ENCODE measurements at regions of chr13 and their contacts with region 1.

Region 1: DNA sequence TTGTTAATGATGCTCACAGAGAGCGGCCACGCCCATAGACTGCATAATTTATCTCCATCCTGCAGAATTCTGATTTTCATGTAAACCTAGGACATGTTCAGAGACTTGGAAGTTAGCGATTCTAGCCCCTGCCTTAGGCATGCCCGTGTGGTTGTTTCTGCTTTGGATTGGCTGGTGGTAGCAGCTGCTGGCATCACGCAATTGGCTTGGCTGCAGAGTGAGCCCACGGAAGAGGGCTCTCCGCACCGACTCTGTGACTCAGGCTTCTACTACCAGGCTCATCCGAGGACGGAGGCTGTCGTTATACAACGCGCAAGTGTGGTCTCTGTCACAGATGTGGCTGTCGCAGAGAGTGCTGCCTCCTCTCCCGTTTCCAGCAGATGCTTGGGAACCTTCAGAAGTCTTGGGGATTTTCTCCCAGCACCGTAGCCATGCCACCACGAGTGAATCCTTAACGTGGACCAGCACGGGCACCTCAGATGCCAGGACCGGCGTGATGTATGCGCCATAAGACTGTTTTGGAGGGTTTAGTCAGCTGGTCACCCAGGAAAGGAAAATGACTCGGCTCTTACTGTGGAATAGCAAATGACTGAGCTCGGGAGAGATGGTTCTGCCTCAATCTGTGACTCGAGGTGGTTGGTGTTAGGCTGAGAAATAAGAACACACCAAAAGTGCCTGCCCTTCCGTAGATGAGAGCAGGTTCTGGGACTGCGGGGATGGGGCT is 61.0 kb upstream of the F7 start:
- DNase-seq: peak; percentile 59 to 94 (median 92)
- H3K4me3 ChIP-seq: peak overlapping the region; percentile 41 to 85 (median 68)
- H3K27ac ChIP-seq: peak overlapping the region; percentile 16 to 98 (median 91)
- H3K27me3 ChIP-seq: no peaks in the 10 kb centered on the region
- CTCF ChIP-seq: peak in 17 of 56 donors; percentile 6 to 42 (median 18)

Region 2: GRCh38 chr13:112972867-112973576 is 71.5 kb before region 1 on chr13:
- intact Hi-C with region 1: no loop called
- DNase-seq: peak in 2 of 10 donors; percentile 33 to 41
- H3K4me3 ChIP-seq: peak overlapping the region in 3 of 59 donors; percentile 3 to 28 (median 15)
- H3K27ac ChIP-seq: peak overlapping the region in 2 of 59 donors; percentile 17 to 77
- H3K27me3 ChIP-seq: peaks cover 0 to 29% (median 0%) of the 10 kb centered on the region in 45 donors
- CTCF ChIP-seq: no peak

Region 3: DNA sequence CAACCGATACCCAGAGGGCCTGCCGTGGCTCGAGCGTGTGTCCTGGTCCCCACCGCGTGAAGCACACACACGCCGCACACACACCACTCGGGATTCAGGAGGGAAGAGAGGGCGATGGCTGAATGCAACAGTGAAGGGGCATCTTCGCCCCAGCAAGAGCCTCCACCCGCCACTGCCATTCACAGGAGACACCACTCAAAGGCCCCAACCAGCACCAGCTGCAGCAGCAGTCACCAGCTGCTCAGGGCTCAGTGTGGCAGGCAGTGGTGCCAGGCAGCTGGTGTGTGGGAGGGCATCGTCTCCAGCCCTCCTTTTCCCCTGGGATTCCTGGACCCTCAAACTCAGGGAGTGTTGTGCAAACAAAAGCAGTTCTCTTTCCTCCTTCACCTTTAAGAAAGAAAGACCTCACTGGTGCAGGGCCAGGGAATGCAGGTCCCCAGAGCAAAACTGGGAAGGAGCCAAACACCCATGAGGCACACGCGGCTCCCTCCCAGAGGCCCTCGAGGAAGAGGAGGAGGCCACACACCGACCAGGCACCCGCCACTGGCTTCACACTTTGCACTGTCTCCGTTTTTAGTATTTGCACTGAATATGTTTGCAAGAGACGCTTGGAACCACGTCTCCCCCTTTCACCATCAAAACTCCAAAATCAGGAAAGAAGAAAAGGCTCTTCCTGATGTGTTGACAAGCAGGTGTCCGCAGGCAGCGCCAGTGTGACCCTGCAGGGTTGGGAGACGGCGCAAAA is 34.5 kb after region 1 on chr13:
- intact Hi-C with region 1: loop called in 1 of 2 experiments (anchors 2 kb)
- DNase-seq: peak in 9 of 10 donors; percentile 47 to 88 (median 79)
- H3K4me3 ChIP-seq: peak overlapping the region in 1 of 59 donors; percentile 5
- H3K27ac ChIP-seq: peak overlapping the region; percentile 59 to 96 (median 90)
- H3K27me3 ChIP-seq: no peaks in the 10 kb centered on the region
- CTCF ChIP-seq: peak in 1 of 56 donors; percentile 14

Region 4: GRCh38 chr13:113153810-113154748 is 109.5 kb after region 1 on chr13:
- intact Hi-C with region 1: loop called (anchors 2 to 5 kb)
- DNase-seq: peak; percentile 73 to 86 (median 82)
- H3K4me3 ChIP-seq: peak overlapping the region; percentile 24 to 74 (median 57)
- H3K27ac ChIP-seq: peak overlapping the region in 58 of 59 donors; percentile 6 to 90 (median 80)
- H3K27me3 ChIP-seq: no peaks in the 10 kb centered on the region
- CTCF ChIP-seq: peak in 7 of 56 donors; percentile 6 to 37 (median 13)

Region 5: DNA sequence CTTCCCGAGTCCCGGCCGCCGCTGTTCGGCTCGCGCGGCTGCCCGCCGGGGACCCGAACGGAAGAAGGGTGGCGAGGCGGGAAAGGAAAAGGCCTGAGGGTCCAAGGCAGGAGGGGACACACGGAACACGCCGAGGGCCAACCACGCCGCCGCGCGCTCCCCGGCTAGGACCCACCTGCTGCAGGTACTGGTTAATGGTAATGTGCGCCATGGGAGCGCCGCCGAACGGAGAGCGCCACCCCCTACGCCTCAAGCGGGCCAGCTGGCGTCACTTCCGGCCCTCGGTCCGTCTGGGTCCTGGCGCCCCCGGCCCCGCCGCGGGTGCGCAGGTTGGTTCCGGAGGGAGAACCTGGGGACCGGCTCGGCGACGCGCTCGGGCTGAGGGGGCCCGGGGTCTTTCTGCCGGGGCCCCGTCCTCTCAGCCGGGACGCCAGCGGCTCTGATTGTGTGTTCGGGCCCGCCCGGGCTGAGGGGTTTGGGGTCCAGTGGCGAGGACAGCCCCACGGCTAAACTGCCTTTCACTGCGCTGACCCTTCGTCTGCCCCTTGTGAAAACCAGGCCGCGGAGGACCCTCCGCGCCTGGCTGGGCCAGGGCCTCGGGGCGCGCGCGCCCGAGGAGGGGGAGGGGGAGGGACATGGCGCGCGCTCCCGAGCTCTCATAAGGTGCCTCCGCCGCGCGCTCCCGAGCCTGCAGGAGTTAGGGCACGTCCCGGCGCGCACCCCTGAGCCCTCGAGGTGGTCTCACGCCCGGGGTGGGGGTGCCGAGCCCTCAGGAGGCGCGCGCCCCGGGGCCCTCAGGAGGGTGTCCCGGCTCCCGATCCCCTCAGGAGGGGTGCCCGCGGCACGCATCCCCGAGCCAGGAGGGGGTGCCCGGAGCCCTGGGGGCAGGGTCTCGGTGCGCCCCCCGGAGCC is 164.1 kb after region 1 on chr13 and contains the start of gene PCID2:
- intact Hi-C with region 1: loop called (anchors 5 kb)
- DNase-seq: peak; percentile 75 to 95 (median 85)
- H3K4me3 ChIP-seq: peak within 1 kb of the TSS; percentile 68 to 100 (median 94)
- H3K27ac ChIP-seq: peak within 1 kb of the TSS; percentile 88 to 100 (median 98)
- H3K27me3 ChIP-seq: no peaks in the 10 kb centered on the region
- CTCF ChIP-seq: peak in 47 of 56 donors; percentile 7 to 63 (median 39)
- total RNA-seq, gene PCID2: 32.8 to 106 (median 48.0) TPM